PC-3 (cell line): ENCODE measurements at regions of chr3 and their contacts with region 1.

Region 1: GRCh38 chr3:18633020-18633419 is 207.9 kb upstream of the SATB1 start:
- DNase-seq: peak; percentile 41
- ATAC-seq: no peak
- H3K4me3 ChIP-seq: no peak overlapping the region
- H3K27ac ChIP-seq: no peak overlapping the region
- H3K4me1 ChIP-seq: peaks cover 28% of the 10 kb centered on the region
- H3K27me3 ChIP-seq: no peaks in the 10 kb centered on the region
- CTCF ChIP-seq: 0 out of 2 replicates have a peak, but pooled peaks have one; percentile 11

Region 2: DNA sequence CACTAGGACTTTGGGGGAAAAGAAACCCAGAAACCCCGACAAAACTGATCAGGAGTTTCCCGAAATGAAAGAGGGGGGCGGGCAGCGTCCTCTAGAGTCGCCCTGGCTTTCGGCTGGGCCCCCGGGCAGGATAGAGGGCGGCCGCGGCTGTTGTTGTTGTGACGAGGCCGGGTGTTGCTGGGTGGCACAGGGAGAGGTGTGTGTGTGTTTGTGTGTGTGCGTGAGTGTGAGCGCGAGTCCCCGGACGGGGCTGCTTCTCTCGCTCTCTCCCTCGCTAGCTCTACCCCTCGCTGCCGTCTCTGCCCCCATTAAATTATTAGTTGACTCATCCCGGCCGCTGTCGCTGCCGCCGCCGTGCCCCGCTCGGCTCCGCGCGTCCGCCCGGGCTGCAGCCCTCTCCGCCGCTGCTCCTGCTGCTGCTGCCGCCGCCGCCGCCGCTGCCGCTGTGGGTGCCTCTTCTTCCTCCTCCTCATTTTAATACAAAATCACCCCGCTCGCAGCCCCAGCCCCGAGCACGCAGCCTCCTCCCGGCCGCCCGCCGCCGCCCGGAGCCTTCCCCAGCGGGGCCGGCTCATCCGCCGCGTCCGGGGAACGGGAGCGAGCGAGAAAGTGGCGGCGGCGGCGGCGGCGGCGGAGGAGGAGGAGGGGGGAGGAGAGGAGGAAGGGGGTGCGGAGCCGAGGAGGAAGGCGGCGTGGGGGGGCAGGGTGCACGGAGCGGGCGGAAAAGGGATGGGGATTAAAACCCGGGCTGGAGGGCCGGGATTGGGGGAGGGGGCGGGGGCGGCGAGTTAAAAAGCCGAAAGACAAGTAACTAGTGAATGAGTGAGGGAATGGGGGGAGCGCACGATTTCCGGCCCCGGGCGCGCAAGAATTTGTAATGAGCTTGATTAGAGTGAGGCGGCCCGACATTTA is 208.0 kb before region 1 on chr3 and contains the start of gene SATB1:
- CTCF ChIA-PET with region 1: no interaction called
- POLR2A ChIA-PET with region 1: no interaction called
- intact Hi-C with region 1: loop called (anchors 2 kb)
- DNase-seq: peak; percentile 48
- ATAC-seq: peak; percentile 57
- H3K4me3 ChIP-seq: peak within 1 kb of the TSS; percentile 85
- H3K27ac ChIP-seq: no peak within 1 kb of the TSS
- H3K4me1 ChIP-seq: peaks cover 13% of the 10 kb centered on the region; the same call in 1 of the 2 replicates
- H3K27me3 ChIP-seq: no peaks in the 10 kb centered on the region
- CTCF ChIP-seq: no peak
- total RNA-seq, gene SATB1: 15.6 and 28.6 TPM in 2 replicates

Region 3: DNA sequence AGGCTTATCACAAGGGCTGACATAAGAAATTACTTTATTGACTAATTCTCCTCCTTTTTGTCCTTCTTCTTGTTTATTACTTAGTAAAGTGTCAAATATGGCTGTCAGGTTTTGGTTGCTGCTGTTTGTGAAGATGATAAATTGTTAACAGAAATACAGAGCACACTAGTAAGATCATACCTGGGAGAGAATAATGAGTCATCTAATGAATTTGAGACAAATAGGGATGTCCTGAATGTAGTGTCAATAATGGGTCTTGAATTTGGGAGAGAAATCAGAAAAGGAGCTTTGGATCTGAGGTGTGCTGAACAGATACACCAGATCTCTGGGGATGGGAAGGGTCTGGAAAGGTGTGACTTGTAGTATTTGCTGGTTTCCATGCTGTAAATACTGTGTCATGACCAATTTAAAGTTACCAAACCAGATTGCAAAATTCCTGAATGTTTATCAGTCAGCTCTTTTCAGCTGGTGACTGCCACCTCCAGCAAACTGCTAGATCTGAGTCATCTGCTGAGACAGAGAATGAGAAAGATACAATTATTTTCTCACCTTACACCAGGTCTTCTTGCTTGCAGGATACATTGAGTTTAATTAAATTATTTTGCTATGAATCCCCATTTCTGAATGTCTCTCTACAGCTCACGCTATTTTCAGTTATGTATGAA is 131.2 kb before region 1 on chr3:
- CTCF ChIA-PET with region 1: no interaction called
- POLR2A ChIA-PET with region 1: no interaction called
- intact Hi-C with region 1: loop called (anchors 5 kb)
- DNase-seq: peak; percentile 71
- ATAC-seq: peak; percentile 78
- H3K4me3 ChIP-seq: no peak overlapping the region
- H3K27ac ChIP-seq: 0 out of 2 replicates have a peak overlapping the region, but pooled peaks have one; percentile 4
- H3K4me1 ChIP-seq: peaks cover 17% of the 10 kb centered on the region
- H3K27me3 ChIP-seq: no peaks in the 10 kb centered on the region
- CTCF ChIP-seq: no peak

Region 4: GRCh38 chr3:18618723-18619122 is 14.3 kb before region 1 on chr3:
- CTCF ChIA-PET with region 1: no interaction called
- POLR2A ChIA-PET with region 1: no interaction called
- intact Hi-C with region 1: no loop called
- DNase-seq: no peak
- ATAC-seq: no peak
- H3K4me3 ChIP-seq: no peak overlapping the region
- H3K27ac ChIP-seq: no peak overlapping the region
- H3K4me1 ChIP-seq: no peaks in the 10 kb centered on the region
- H3K27me3 ChIP-seq: no peaks in the 10 kb centered on the region
- CTCF ChIP-seq: no peak

Region 5: DNA sequence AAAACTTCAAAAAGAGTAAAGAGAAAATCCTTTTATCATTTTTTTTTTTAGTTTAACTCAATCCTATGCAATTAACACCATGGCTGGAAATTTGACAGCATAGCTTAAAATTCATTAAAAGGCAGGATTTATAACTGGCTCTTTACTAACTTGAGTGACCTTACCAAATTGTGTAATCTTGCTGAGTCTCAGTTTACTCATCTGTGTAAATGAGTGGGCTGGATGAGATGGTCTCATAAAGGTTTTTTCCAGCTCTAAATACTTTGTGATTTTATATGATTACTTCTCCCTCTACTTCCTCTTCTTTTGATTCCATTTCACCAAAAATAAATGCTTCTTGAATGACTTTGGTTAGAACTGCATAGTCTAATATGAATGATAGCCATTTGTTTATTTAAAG is 27.0 kb after region 1 on chr3:
- CTCF ChIA-PET with region 1: no interaction called
- POLR2A ChIA-PET with region 1: no interaction called
- intact Hi-C with region 1: loop called (anchors 1 kb)
- DNase-seq: peak; percentile 69
- ATAC-seq: peak; percentile 68
- H3K4me3 ChIP-seq: peak overlapping the region; percentile 19; the same call in 1 of the 2 replicates
- H3K27ac ChIP-seq: peak overlapping the region; percentile 70
- H3K4me1 ChIP-seq: peaks cover 31% of the 10 kb centered on the region
- H3K27me3 ChIP-seq: no peaks in the 10 kb centered on the region
- CTCF ChIP-seq: no peak

Region 6: GRCh38 chr3:18766974-18767373 is 134.0 kb after region 1 on chr3:
- CTCF ChIA-PET with region 1: no interaction called
- POLR2A ChIA-PET with region 1: no interaction called
- intact Hi-C with region 1: loop called (anchors 1 kb)
- DNase-seq: peak; percentile 22
- ATAC-seq: no peak
- H3K4me3 ChIP-seq: no peak overlapping the region
- H3K27ac ChIP-seq: peak overlapping the region; percentile 33
- H3K4me1 ChIP-seq: peaks cover 24% of the 10 kb centered on the region
- H3K27me3 ChIP-seq: no peaks in the 10 kb centered on the region
- CTCF ChIP-seq: no peak

Region 7: GRCh38 chr3:18853269-18853668 is 220.2 kb after region 1 on chr3:
- CTCF ChIA-PET with region 1: no interaction called
- POLR2A ChIA-PET with region 1: no interaction called
- intact Hi-C with region 1: no loop called
- DNase-seq: no peak
- ATAC-seq: no peak
- H3K4me3 ChIP-seq: no peak overlapping the region
- H3K27ac ChIP-seq: no peak overlapping the region
- H3K4me1 ChIP-seq: no peaks in the 10 kb centered on the region
- H3K27me3 ChIP-seq: no peaks in the 10 kb centered on the region
- CTCF ChIP-seq: no peak